Heart left ventricle (tissue), 16 donors: ENCODE measurements at regions of chr13 and their contacts with region 1.

Region 1: GRCh38 chr13:80116107-80116506 is 224.8 kb downstream of the SPRY2 start:
- DNase-seq: no peak
- ATAC-seq: peak in 1 of 4 donors; percentile 59
- H3K4me3 ChIP-seq: no peak overlapping the region
- H3K27ac ChIP-seq: no peak overlapping the region
- H3K4me1 ChIP-seq: peaks cover 0 to 3% (median 0%) of the 10 kb centered on the region in 12 donors
- H3K27me3 ChIP-seq: no peaks in the 10 kb centered on the region
- CTCF ChIP-seq: no peak
- POLR2A ChIP-seq: no peak

Region 2: DNA sequence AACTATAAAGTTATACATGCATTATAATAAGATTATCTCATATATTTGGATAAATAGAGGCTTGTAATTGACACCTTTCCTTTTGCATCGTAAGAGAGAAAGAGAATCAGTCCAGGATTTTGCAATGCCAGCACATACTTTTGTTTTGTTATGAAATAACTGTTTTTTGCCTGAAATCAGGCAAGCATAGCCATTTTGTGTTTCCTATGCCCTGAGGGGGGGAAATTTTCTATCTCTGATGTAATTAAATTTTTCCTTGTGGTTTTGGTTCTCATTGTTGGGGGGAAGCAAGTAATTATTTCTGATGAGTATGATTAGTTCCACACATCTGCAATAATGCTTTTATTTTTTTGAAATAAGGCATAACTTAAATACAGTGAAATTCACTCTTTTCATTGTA is 405.7 kb before region 1 on chr13:
- intact Hi-C with region 1: no loop called
- DNase-seq: no peak
- ATAC-seq: no peak
- H3K4me3 ChIP-seq: no peak overlapping the region
- H3K27ac ChIP-seq: no peak overlapping the region
- H3K4me1 ChIP-seq: peaks cover 0 to 5% (median 0%) of the 10 kb centered on the region in 12 donors
- H3K27me3 ChIP-seq: no peaks in the 10 kb centered on the region
- CTCF ChIP-seq: no peak
- POLR2A ChIP-seq: no peak

Region 3: GRCh38 chr13:79874396-79875360 is 241.4 kb before region 1 on chr13:
- intact Hi-C with region 1: no loop called
- DNase-seq: no peak
- ATAC-seq: no peak
- H3K4me3 ChIP-seq: no peak overlapping the region
- H3K27ac ChIP-seq: no peak overlapping the region
- H3K4me1 ChIP-seq: peaks cover 0 to 2% (median 0%) of the 10 kb centered on the region in 12 donors
- H3K27me3 ChIP-seq: no peaks in the 10 kb centered on the region
- CTCF ChIP-seq: no peak
- POLR2A ChIP-seq: no peak

Region 4: GRCh38 chr13:80009760-80010159 is 106.3 kb before region 1 on chr13:
- intact Hi-C with region 1: loop called in 1 of 10 experiments (anchors 10 kb)
- DNase-seq: no peak
- ATAC-seq: no peak
- H3K4me3 ChIP-seq: no peak overlapping the region
- H3K27ac ChIP-seq: no peak overlapping the region
- H3K4me1 ChIP-seq: peaks cover 0 to 17% (median 6%) of the 10 kb centered on the region in 12 donors
- H3K27me3 ChIP-seq: no peaks in the 10 kb centered on the region
- CTCF ChIP-seq: no peak
- POLR2A ChIP-seq: no peak

Region 5: GRCh38 chr13:80054806-80055205 is 61.3 kb before region 1 on chr13:
- intact Hi-C with region 1: loop called in 1 of 10 experiments (anchors 10 kb)
- DNase-seq: no peak
- ATAC-seq: no peak
- H3K4me3 ChIP-seq: no peak overlapping the region
- H3K27ac ChIP-seq: no peak overlapping the region
- H3K4me1 ChIP-seq: peaks cover 0 to 8% (median 6%) of the 10 kb centered on the region in 12 donors
- H3K27me3 ChIP-seq: no peaks in the 10 kb centered on the region
- CTCF ChIP-seq: no peak
- POLR2A ChIP-seq: no peak